ENCODE measurements at regions of chr3 and their contacts with region 1.

Region 1: DNA sequence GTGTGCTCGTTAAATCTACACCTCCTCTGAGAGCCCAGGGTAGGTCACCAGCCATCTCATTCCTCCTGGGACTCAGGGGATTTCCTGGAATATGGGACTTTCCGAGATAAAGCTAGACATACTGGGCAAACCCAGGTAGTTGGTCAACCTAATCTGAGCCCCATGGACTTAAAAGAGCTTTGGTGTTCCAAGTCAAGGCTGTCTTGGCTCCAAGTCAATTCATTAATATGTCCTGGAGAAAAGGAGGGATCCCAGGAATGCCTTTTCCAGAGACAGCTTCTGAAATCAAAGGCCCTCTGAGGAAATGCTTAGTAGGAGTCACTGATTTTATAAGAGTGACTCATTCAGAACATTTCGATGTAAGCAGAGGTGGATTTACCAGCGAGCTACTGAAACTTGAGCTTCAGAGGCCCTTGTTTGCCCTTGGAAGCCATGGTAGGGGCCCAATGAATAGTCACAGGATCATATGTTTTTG is 137.3 kb upstream of the UBE2E1 start:
- DNase-seq: peak; percentile 82
- ATAC-seq: peak; percentile 85
- H3K4me3 ChIP-seq: peak overlapping the region in 1 of 2 experiments; percentile 13; a peak in 2 of 4 replicates
- H3K27ac ChIP-seq: peak overlapping the region; percentile 96
- H3K4me1 ChIP-seq: peaks cover 44% of the 10 kb centered on the region
- H3K27me3 ChIP-seq: no peaks in the 10 kb centered on the region
- CTCF ChIP-seq: no peak

Region 2: DNA sequence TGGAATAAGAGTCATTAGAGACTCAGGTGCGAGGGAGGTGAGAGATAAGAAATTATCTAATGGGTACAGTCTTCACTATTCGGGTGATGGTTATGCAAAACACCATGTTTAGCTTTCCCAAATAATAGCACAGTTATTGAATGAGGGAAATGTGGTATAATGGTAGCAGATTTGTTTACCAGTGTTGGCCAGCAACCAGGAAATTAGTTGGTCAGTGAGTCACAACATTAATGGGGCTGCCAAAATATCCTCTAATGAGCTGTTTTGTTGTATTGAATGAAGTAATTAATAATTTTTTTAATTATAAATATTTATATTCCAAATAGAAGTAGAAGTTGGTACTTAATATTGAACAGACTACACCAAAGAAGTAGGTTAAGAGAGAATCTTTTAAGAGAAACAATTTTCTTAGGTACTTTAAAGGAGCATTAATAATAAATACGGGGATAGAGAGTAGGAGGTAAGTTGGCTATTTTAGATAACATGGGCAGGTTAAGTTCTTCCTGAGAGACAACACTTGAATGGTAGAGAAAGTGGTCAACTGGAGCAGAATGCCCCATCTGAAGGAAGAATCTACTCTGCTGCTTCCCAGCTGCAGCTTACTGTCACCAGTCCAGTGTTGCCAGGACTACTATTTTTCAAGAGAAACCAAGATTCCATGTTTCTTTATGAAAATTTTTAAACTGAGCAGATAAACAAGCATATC is 246.5 kb before region 1 on chr3:
- CTCF ChIA-PET with region 1: no interaction called
- POLR2A ChIA-PET with region 1: no interaction called
- in situ Hi-C with region 1: no loop called
- intact Hi-C with region 1: no loop called
- DNase-seq: no peak
- ATAC-seq: no peak
- H3K4me3 ChIP-seq: no peak overlapping the region
- H3K27ac ChIP-seq: no peak overlapping the region
- H3K4me1 ChIP-seq: no peaks in the 10 kb centered on the region
- H3K27me3 ChIP-seq: no peaks in the 10 kb centered on the region
- CTCF ChIP-seq: no peak

Region 3: DNA sequence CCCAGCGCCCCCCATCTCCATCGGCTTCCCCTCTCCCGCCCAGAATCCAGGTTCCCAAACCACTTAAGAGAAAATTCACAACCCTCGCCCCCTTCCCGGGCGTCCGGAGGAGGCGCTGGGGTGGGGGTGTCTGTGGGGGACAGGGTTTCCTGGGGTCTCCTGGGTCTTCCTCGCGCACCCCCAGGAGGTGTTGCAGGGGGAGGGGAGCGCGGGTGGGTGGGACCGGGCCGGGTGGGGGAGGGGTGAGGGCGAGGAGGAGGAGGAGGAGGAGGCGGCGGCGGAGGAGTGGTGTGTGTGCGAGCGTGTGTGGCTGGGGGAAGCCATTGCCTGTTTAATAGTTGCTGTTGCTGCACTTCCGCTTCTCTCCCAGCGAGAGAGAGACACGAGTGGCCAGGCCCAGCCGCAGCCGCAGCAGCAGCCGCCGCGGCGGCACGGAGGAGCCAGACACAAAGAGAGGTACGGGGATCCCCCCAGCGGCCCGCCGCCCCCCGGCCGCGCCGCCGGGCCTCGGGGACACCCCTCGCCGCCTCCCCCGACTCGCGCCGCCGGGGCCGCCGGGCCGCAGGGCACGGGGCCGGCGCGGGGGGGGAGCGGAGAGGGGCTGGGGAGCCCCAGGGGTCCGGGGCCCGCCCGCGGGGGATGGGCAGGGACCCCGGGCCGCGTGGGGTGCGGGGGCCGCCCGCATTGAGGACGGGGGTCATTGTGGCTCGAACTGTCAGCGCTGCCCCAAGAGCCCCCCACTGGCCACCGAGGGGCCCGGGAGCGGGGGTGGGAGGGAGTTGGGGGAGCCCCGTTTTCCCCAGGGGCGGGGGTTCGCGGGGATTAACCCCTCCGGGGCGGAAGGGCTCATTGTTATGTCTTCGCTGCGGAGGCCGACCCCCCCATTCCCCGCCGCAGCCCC is 137.4 kb after region 1 on chr3 and contains the start of gene UBE2E1:
- CTCF ChIA-PET with region 1: no interaction called
- POLR2A ChIA-PET with region 1: no interaction called
- in situ Hi-C with region 1: no loop called
- intact Hi-C with region 1: loop called (anchors 10 kb)
- DNase-seq: no peak
- ATAC-seq: peak; percentile 76
- H3K4me3 ChIP-seq: peak within 1 kb of the TSS; percentile 63 to 73
- H3K27ac ChIP-seq: peak within 1 kb of the TSS; percentile 96
- H3K4me1 ChIP-seq: peaks cover 27% of the 10 kb centered on the region
- H3K27me3 ChIP-seq: no peaks in the 10 kb centered on the region
- CTCF ChIP-seq: no peak
- total RNA-seq, gene UBE2E1: 127 TPM

Measured in Panc1 (cell line).